SK-N-SH (cell line): ENCODE measurements at regions of chr3 and their contacts with region 1.

Region 1: DNA sequence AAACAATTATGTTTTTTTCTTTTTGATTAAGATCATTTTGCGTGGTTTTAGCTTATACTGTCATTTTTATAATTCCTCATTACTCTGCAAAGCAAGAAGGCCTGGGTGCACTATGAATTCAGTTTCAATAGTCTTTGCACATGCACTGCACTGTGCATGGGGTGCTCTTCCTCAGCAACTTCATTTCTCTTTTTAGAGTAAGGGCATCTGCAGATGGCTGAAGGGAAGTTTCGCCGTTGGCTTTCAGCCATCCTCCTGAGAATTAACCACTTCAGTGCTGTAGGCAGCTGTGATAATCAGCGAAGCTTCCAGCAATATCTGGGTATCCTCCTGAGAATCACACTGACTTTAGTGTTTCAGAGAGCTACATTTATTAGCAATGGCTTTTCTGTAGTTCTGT is 284.8 kb downstream of the GBE1 start:
- DNase-seq: no peak
- H3K4me3 ChIP-seq: no peak overlapping the region
- H3K27ac ChIP-seq: no peak overlapping the region
- H3K4me1 ChIP-seq: no peaks in the 10 kb centered on the region
- H3K27me3 ChIP-seq: no peaks in the 10 kb centered on the region
- CTCF ChIP-seq: no peak
- EP300 ChIP-seq: no peak
- RAD21 ChIP-seq: no peak

Region 2: GRCh38 chr3:81459733-81460132 is 17.0 kb before region 1 on chr3:
- CTCF ChIA-PET with region 1: no interaction called
- POLR2A ChIA-PET with region 1: no interaction called
- DNase-seq: no peak
- H3K4me3 ChIP-seq: no peak overlapping the region
- H3K27ac ChIP-seq: no peak overlapping the region
- H3K4me1 ChIP-seq: peaks cover 0 to 7% of the 10 kb centered on the region in 2 experiments; a peak in 2 of 4 replicates
- H3K27me3 ChIP-seq: no peaks in the 10 kb centered on the region
- CTCF ChIP-seq: no peak
- EP300 ChIP-seq: no peak
- RAD21 ChIP-seq: no peak

Region 3: GRCh38 chr3:81490541-81491288 is 14.0 kb after region 1 on chr3:
- CTCF ChIA-PET with region 1: interaction called, 35 read pairs
- POLR2A ChIA-PET with region 1: no interaction called
- DNase-seq: peak; percentile 41
- H3K4me3 ChIP-seq: no peak overlapping the region
- H3K27ac ChIP-seq: no peak overlapping the region
- H3K4me1 ChIP-seq: no peaks in the 10 kb centered on the region; a peak in 3 of 4 replicates
- H3K27me3 ChIP-seq: no peaks in the 10 kb centered on the region
- CTCF ChIP-seq: peak; percentile 81
- EP300 ChIP-seq: no peak
- RAD21 ChIP-seq: peak; percentile 82